A549 (cell line): ENCODE measurements at regions of chr10 and their contacts with region 1.

Region 1: DNA sequence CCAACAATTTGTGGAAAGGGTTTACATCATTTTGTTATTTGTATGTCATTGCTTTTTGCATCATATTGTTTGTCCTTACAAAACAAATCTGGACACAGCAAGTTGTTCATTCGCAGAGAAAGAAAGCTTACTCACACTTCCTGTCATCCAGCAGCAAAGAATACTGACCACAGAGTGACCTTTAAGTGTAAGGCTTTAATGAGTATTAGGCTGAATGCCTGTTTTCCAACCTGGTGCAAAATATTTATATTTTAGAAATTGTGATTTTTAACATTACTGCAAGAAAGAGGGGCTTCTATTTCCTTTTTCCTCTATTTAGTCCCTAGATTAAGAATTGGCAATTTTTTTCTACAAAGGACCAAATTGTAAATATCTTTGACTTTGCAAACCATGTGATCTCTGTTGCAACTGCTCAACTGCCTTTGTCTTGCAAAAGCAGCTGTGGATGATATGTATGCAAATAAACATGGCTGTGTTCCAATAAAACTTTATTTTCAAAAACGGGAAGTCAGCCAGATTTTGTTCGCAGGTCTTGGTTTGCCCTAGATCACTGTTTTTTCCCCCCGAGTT is 27.8 kb upstream of the ITGB1 start:
- DNase-seq: peak in 1 of 2 experiments; percentile 97
- ATAC-seq: peak; percentile 48
- H3K4me3 ChIP-seq: peak overlapping the region; percentile 4; the same call in 1 of the 3 replicates
- H3K27ac ChIP-seq: peak overlapping the region; percentile 96 to 99
- H3K4me1 ChIP-seq: peaks cover 72% of the 10 kb centered on the region
- CTCF ChIP-seq: no peak
- EP300 ChIP-seq: peak; percentile 92 to 93; a peak in 4 of 5 replicates
- POLR2A ChIP-seq: no peak
- RAD21 ChIP-seq: peak in 1 of 2 experiments; percentile 11; a peak in 2 of 5 replicates

Region 2: GRCh38 chr10:32445740-32446535 is 539.9 kb before region 1 on chr10 and contains the start of gene CCDC7:
- CTCF ChIA-PET with region 1: no interaction called
- POLR2A ChIA-PET with region 1: no interaction called
- DNase-seq: peak; percentile 57 to 87
- ATAC-seq: peak; percentile 97
- H3K4me3 ChIP-seq: peak within 1 kb of the TSS; percentile 55
- H3K27ac ChIP-seq: peak within 1 kb of the TSS; percentile 90 to 91
- H3K4me1 ChIP-seq: peaks cover 8% of the 10 kb centered on the region; the same call in 2 of the 3 replicates
- CTCF ChIP-seq: peak; percentile 56
- EP300 ChIP-seq: no peak
- POLR2A ChIP-seq: peak; percentile 83
- RAD21 ChIP-seq: peak; percentile 38 to 72; a peak in 4 of 5 replicates
- polyA plus RNA-seq, gene CCDC7: 2.7 and 2.9 TPM in 2 replicates

Region 3: GRCh38 chr10:33001908-33002492 is 16.1 kb after region 1 on chr10:
- CTCF ChIA-PET with region 1: interaction called, 168 read pairs
- POLR2A ChIA-PET with region 1: interaction called, 163 read pairs
- DNase-seq: peak in 1 of 2 experiments; percentile 77
- ATAC-seq: no peak
- H3K4me3 ChIP-seq: no peak overlapping the region
- H3K27ac ChIP-seq: peak overlapping the region; percentile 98 to 99
- H3K4me1 ChIP-seq: peaks cover 80% of the 10 kb centered on the region
- CTCF ChIP-seq: no peak
- EP300 ChIP-seq: no peak
- POLR2A ChIP-seq: no peak
- RAD21 ChIP-seq: no peak